ENCODE measurements at regions of chr5 and their contacts with region 1.

Region 1: GRCh38 chr5:73201547-73202513 is 28.8 kb downstream of the TMEM174 start:
- DNase-seq: peak; percentile 47
- ATAC-seq: peak; percentile 99
- H3K4me3 ChIP-seq: no peak overlapping the region
- H3K27ac ChIP-seq: no peak overlapping the region
- H3K4me1 ChIP-seq: no peaks in the 10 kb centered on the region
- H3K27me3 ChIP-seq: peaks cover 11% of the 10 kb centered on the region
- CTCF ChIP-seq: peak; percentile 78
- POLR2A ChIP-seq: no peak
- RAD21 ChIP-seq: peak; percentile 69

Region 2: GRCh38 chr5:72955768-72956323 is 246.0 kb before region 1 on chr5 and contains the start of gene FCHO2:
- CTCF ChIA-PET with region 1: no interaction called
- POLR2A ChIA-PET with region 1: no interaction called
- dilution Hi-C with region 1: no loop called
- in situ Hi-C with region 1: no loop called
- intact Hi-C with region 1: loop called (anchors 1 kb)
- DNase-seq: peak; percentile 95
- ATAC-seq: peak; percentile 84
- H3K4me3 ChIP-seq: peak within 1 kb of the TSS; percentile 81
- H3K27ac ChIP-seq: peak within 1 kb of the TSS; percentile 96
- H3K4me1 ChIP-seq: peaks cover 13% of the 10 kb centered on the region
- H3K27me3 ChIP-seq: no peaks in the 10 kb centered on the region
- CTCF ChIP-seq: peak; percentile 81
- POLR2A ChIP-seq: peak; percentile 74
- RAD21 ChIP-seq: peak; percentile 61
- total RNA-seq, gene FCHO2: 13.1 and 23.5 TPM in 2 replicates

Region 3: DNA sequence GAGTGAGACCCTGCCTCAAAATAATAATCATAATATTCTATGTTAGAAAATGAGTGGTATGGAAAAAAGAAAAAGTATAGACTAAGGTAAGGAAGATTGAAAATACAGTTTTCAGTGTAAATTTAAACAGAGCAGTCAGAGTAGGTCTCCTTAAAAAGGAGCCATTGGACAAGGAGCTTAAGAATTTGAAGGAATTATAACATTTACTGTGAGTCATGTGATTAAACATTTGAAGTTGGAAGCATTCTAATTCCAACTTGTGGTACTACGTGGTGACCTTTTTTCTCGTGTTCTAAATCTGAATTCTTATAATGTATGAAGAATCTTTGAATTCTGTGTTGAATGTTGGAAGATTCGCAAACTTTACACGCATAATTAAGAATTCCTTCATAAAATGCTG is 120.7 kb before region 1 on chr5:
- CTCF ChIA-PET with region 1: interaction called, 4 read pairs
- POLR2A ChIA-PET with region 1: no interaction called
- dilution Hi-C with region 1: no loop called
- in situ Hi-C with region 1: loop called (anchors 5 kb)
- intact Hi-C with region 1: loop called (anchors 1 kb)
- DNase-seq: no peak
- ATAC-seq: peak; percentile 56; the same call in 1 of the 2 replicates
- H3K4me3 ChIP-seq: no peak overlapping the region
- H3K27ac ChIP-seq: no peak overlapping the region
- H3K4me1 ChIP-seq: no peaks in the 10 kb centered on the region; the same call in 1 of the 2 replicates
- H3K27me3 ChIP-seq: no peaks in the 10 kb centered on the region
- CTCF ChIP-seq: no peak
- POLR2A ChIP-seq: no peak
- RAD21 ChIP-seq: no peak

Region 4: GRCh38 chr5:73088026-73088425 is 113.8 kb before region 1 on chr5:
- CTCF ChIA-PET with region 1: interaction called, 4 read pairs
- POLR2A ChIA-PET with region 1: no interaction called
- dilution Hi-C with region 1: no loop called
- in situ Hi-C with region 1: loop called (anchors 5 kb)
- intact Hi-C with region 1: loop called (anchors 1 kb)
- DNase-seq: peak; percentile 46
- ATAC-seq: peak; percentile 49; the same call in 1 of the 2 replicates
- H3K4me3 ChIP-seq: no peak overlapping the region
- H3K27ac ChIP-seq: no peak overlapping the region
- H3K4me1 ChIP-seq: 0 out of 2 replicates have a peak, but pooled peaks cover 1% of the 10 kb centered on the region
- H3K27me3 ChIP-seq: no peaks in the 10 kb centered on the region
- CTCF ChIP-seq: no peak
- POLR2A ChIP-seq: no peak
- RAD21 ChIP-seq: no peak

Region 5: GRCh38 chr5:73135429-73136054 is 66.3 kb before region 1 on chr5:
- CTCF ChIA-PET with region 1: no interaction called
- POLR2A ChIA-PET with region 1: no interaction called
- dilution Hi-C with region 1: no loop called
- in situ Hi-C with region 1: no loop called
- intact Hi-C with region 1: loop called (anchors 5 kb)
- DNase-seq: peak; percentile 42
- ATAC-seq: peak; percentile 70; the same call in 1 of the 2 replicates
- H3K4me3 ChIP-seq: no peak overlapping the region
- H3K27ac ChIP-seq: no peak overlapping the region
- H3K4me1 ChIP-seq: peaks cover 6% of the 10 kb centered on the region
- H3K27me3 ChIP-seq: peaks cover 4% of the 10 kb centered on the region; the same call in 1 of the 2 replicates
- CTCF ChIP-seq: peak; percentile 48
- POLR2A ChIP-seq: no peak
- RAD21 ChIP-seq: peak; percentile 50

Measured in IMR-90 (cell line).